ENCODE measurements at regions of chr4 and their contacts with region 1.

Region 1: GRCh38 chr4:48779998-48780742 is at the start of gene FRYL:
- DNase-seq: peak; percentile 99
- H3K4me3 Mint-ChIP-seq: peak within 1 kb of the TSS; percentile 91
- H3K27ac Mint-ChIP-seq: peak within 1 kb of the TSS; percentile 96
- H3K4me1 Mint-ChIP-seq: peaks cover 38% of the 10 kb centered on the region
- H3K27me3 Mint-ChIP-seq: no peaks in the 10 kb centered on the region
- total RNA-seq, gene FRYL: 62.0 and 66.0 TPM in 2 replicates

Region 2: DNA sequence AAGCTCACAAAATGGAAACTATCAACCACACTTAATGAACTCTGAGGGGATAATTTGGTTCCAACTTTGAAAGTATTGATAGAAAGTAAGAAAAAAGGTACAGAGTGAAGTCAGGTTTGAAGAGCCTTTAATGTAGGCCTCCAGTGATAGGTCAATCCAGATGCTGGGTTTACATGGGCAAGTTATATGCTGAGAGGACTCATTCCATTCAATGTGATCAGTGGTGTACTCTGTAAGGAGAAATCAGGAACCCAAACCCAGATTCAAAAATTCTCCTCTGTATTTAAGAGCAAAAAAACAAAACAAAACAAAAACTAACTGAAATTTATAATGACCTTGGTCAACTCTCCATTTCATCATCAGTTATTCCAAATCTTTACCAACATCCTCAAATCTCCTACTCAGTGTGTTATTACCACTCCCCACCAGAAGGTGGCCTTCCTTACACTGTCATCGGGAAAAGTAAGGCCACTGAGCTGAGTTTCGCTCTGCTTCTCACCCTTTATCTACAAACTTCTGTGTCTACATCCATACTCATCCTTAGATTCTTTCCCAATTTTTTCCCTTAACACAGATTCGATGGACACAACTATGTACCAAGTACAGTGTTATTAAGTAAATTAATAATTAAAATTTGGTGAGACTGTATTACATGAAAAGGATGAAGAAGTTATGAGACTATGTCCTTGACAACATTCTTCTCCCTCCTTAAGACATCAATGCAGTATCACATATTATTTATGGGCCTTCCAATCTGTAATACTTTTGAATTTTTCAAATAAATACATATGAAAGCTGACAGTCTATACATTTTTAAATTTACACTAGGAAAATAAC is 201.8 kb before region 1 on chr4:
- intact Hi-C with region 1: loop called (anchors 2 kb)
- DNase-seq: peak; percentile 85
- H3K4me3 Mint-ChIP-seq: no peak overlapping the region
- H3K27ac Mint-ChIP-seq: no peak overlapping the region
- H3K4me1 Mint-ChIP-seq: peaks cover 4% of the 10 kb centered on the region
- H3K27me3 Mint-ChIP-seq: no peaks in the 10 kb centered on the region

Region 3: GRCh38 chr4:48704091-48704801 is 75.9 kb before region 1 on chr4:
- intact Hi-C with region 1: loop called (anchors 5 kb)
- DNase-seq: no peak
- H3K4me3 Mint-ChIP-seq: no peak overlapping the region
- H3K27ac Mint-ChIP-seq: no peak overlapping the region
- H3K4me1 Mint-ChIP-seq: peaks cover 14% of the 10 kb centered on the region
- H3K27me3 Mint-ChIP-seq: no peaks in the 10 kb centered on the region

Region 4: DNA sequence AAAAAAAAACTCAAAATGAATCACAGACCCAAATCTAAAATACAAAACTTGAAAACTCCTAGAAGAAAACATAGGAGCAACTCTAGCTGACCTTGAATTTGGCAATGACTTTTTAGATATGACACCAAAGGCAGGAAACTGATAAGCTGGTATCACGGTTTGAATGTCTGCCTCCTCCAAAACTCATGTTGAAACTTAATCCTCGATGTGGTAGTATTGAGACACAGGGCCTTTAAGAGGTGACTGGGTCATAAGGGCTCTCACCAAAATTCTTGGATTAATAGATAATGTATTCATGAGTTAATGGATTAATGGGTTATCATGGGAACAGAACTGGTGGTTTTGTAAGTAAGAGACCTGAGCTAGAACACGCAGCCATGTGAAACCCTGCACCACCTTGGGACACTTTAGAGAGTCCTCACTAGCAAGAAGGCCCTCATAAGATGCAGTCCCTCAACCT is 40.6 kb before region 1 on chr4:
- intact Hi-C with region 1: loop called (anchors 1 kb)
- DNase-seq: no peak
- H3K4me3 Mint-ChIP-seq: no peak overlapping the region
- H3K27ac Mint-ChIP-seq: no peak overlapping the region
- H3K4me1 Mint-ChIP-seq: peaks cover 49% of the 10 kb centered on the region
- H3K27me3 Mint-ChIP-seq: no peaks in the 10 kb centered on the region

Region 5: GRCh38 chr4:48830706-48831531 is 50.7 kb after region 1 on chr4 and contains the start of gene OCIAD1:
- intact Hi-C with region 1: loop called (anchors 1 kb)
- DNase-seq: peak; percentile 98
- H3K4me3 Mint-ChIP-seq: peak within 1 kb of the TSS; percentile 97
- H3K27ac Mint-ChIP-seq: peak within 1 kb of the TSS; percentile 100
- H3K4me1 Mint-ChIP-seq: peaks cover 20% of the 10 kb centered on the region
- H3K27me3 Mint-ChIP-seq: peaks cover 2% of the 10 kb centered on the region
- total RNA-seq, gene OCIAD1: 116 and 130 TPM in 2 replicates

Region 6: GRCh38 chr4:48963042-48963679 is 183.0 kb after region 1 on chr4:
- intact Hi-C with region 1: loop called (anchors 5 kb)
- DNase-seq: peak; percentile 91
- H3K4me3 Mint-ChIP-seq: no peak overlapping the region
- H3K27ac Mint-ChIP-seq: no peak overlapping the region
- H3K4me1 Mint-ChIP-seq: no peaks in the 10 kb centered on the region
- H3K27me3 Mint-ChIP-seq: peaks cover 18% of the 10 kb centered on the region